ENCODE measurements at regions of chr1 and their contacts with region 1.

Region 1: GRCh38 chr1:246647113-246647512 is 77.1 kb upstream of the SCCPDH start:
- DNase-seq: no peak
- ATAC-seq: peak; percentile 24; the same call in 1 of the 2 replicates
- H3K4me3 ChIP-seq: no peak overlapping the region
- H3K27ac ChIP-seq: no peak overlapping the region
- H3K4me1 ChIP-seq: no peaks in the 10 kb centered on the region
- H3K27me3 ChIP-seq: no peaks in the 10 kb centered on the region
- CTCF ChIP-seq: peak; percentile 37; the same call in 1 of the 2 replicates

Region 2: GRCh38 chr1:246544001-246544400 is 103.1 kb before region 1 on chr1:
- CTCF ChIA-PET with region 1: interaction called, 11 read pairs
- POLR2A ChIA-PET with region 1: no interaction called
- intact Hi-C with region 1: no loop called
- DNase-seq: no peak
- ATAC-seq: no peak
- H3K4me3 ChIP-seq: no peak overlapping the region
- H3K27ac ChIP-seq: no peak overlapping the region
- H3K4me1 ChIP-seq: no peaks in the 10 kb centered on the region
- H3K27me3 ChIP-seq: no peaks in the 10 kb centered on the region
- CTCF ChIP-seq: no peak

Region 3: DNA sequence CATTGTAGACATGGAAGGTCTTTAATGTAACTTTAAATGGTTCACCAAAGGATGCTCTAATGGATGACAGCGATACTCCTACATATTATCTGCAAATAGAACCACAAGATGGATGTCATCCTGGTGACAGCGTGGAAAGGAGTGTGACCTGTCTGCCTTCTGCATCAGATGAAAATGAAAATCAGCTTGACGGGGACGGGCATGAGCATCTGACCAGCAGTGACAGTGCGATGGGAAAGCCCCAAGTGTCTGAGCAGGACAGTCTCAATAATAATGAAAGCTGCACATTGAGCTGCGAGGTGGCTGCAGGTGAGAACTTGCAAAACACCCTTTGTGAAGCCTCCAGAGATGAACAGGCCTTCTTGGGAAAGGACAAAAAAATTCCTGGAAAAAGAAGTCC is 55.6 kb before region 1 on chr1:
- CTCF ChIA-PET with region 1: no interaction called
- POLR2A ChIA-PET with region 1: no interaction called
- intact Hi-C with region 1: no loop called
- DNase-seq: no peak
- ATAC-seq: no peak
- H3K4me3 ChIP-seq: no peak overlapping the region
- H3K27ac ChIP-seq: no peak overlapping the region
- H3K4me1 ChIP-seq: peaks cover 14% of the 10 kb centered on the region
- H3K27me3 ChIP-seq: no peaks in the 10 kb centered on the region
- CTCF ChIP-seq: no peak

Region 4: GRCh38 chr1:247007511-247008405 is 360.6 kb after region 1 on chr1 and contains the start of gene ZNF695:
- CTCF ChIA-PET with region 1: no interaction called
- POLR2A ChIA-PET with region 1: no interaction called
- intact Hi-C with region 1: no loop called
- DNase-seq: peak; percentile 100
- ATAC-seq: peak; percentile 99
- H3K4me3 ChIP-seq: peak within 1 kb of the TSS; percentile 96
- H3K27ac ChIP-seq: peak within 1 kb of the TSS; percentile 27
- H3K4me1 ChIP-seq: peaks cover 5% of the 10 kb centered on the region
- H3K27me3 ChIP-seq: no peaks in the 10 kb centered on the region
- CTCF ChIP-seq: no peak
- total RNA-seq, gene ZNF695: 14.7 and 15.8 TPM in 2 replicates

Region 5: DNA sequence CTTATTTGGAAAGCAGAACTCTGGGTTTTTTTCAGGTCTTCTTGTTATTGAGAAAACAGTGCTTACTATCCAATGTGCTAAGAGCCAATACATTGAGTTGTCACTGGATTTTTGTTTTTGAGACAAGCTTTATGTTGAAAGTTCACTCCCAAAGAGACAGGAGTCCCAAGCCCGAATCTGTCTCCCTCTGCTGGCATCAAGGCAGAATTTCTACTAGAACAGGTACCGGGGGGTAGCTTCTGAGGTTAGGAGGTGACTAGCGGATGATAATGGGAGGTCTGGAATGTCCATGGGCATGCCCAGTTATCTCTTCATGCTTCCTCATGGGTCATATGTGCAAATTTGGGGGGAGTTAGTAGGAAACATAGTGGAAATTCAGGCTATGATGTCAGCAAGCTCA is 499.6 kb after region 1 on chr1:
- CTCF ChIA-PET with region 1: no interaction called
- POLR2A ChIA-PET with region 1: no interaction called
- intact Hi-C with region 1: no loop called
- DNase-seq: no peak
- ATAC-seq: no peak
- H3K4me3 ChIP-seq: no peak overlapping the region
- H3K27ac ChIP-seq: no peak overlapping the region
- H3K4me1 ChIP-seq: no peaks in the 10 kb centered on the region
- H3K27me3 ChIP-seq: no peaks in the 10 kb centered on the region
- CTCF ChIP-seq: peak; percentile 62

Measured in PC-3 (cell line).